Activated naive CD4-positive, alpha-beta T cell treated with anti-CD3 and anti-CD28 coated beads for 36 hours (primary cell): ENCODE measurements at regions of chr1 and their contacts with region 1.

Region 1: GRCh38 chr1:150486964-150487762 is at the start of gene TARS2:
- DNase-seq: peak; percentile 99
- H3K4me3 Mint-ChIP-seq: peak within 1 kb of the TSS; percentile 98
- H3K27ac Mint-ChIP-seq: peak within 1 kb of the TSS; percentile 96
- H3K4me1 Mint-ChIP-seq: peaks cover 10% of the 10 kb centered on the region
- H3K27me3 Mint-ChIP-seq: no peaks in the 10 kb centered on the region
- total RNA-seq, gene TARS2: 43.7 to 46.0 TPM

Region 2: DNA sequence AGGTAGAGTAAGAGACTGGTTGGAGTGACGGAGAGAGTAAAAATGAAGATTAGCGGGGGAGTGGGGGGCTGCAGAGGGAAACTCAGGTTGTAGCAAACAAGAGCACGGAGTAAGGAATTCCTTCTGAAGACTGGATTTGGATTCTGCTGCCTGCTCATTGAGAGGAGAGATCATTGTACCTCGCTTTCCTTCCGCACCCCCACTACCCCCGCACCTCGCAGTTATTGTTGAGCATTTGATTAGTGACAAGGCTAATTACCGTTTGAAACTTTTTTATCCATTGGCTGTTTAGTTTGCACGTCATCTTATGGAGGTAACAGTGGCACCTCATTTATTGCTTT is 165.4 kb before region 1 on chr1:
- CTCF ChIA-PET with region 1: no interaction called
- intact Hi-C with region 1: loop called (anchors 1 kb)
- DNase-seq: no peak
- H3K4me3 Mint-ChIP-seq: peak overlapping the region; percentile 99
- H3K27ac Mint-ChIP-seq: peak overlapping the region; percentile 99
- H3K4me1 Mint-ChIP-seq: peaks cover 36% of the 10 kb centered on the region
- H3K27me3 Mint-ChIP-seq: no peaks in the 10 kb centered on the region

Region 3: DNA sequence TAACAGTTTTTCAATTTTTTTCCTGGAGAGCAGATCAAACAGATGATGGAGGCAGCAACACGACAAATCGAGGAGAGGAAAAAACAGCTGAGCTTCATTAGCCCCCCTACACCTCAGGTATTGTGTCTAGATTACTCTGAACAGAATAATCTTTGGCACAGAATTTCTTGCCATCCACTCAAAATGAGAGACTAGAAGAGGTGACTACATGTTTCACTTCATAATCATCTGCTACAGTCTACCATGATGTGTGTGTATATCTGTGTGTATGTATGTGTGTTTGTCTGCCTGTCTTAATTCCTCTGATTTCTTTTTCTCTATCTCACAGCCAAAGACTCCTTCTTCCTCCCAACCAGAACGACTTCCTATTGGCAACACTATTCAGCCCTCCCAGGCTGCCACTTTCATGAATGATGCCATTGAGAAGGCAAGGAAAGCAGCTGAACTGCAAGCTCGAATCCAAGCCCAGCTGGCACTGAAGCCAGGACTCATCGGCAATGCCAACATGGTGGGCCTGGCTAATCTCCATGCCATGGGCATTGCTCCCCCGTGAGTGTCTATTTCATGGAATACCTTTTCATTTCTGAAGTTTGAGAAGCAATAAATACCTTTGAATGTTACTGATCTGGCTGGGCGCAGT is 154.4 kb before region 1 on chr1:
- CTCF ChIA-PET with region 1: no interaction called
- intact Hi-C with region 1: no loop called
- DNase-seq: no peak
- H3K4me3 Mint-ChIP-seq: no peak overlapping the region
- H3K27ac Mint-ChIP-seq: no peak overlapping the region
- H3K4me1 Mint-ChIP-seq: peaks cover 5% of the 10 kb centered on the region
- H3K27me3 Mint-ChIP-seq: no peaks in the 10 kb centered on the region

Region 4: DNA sequence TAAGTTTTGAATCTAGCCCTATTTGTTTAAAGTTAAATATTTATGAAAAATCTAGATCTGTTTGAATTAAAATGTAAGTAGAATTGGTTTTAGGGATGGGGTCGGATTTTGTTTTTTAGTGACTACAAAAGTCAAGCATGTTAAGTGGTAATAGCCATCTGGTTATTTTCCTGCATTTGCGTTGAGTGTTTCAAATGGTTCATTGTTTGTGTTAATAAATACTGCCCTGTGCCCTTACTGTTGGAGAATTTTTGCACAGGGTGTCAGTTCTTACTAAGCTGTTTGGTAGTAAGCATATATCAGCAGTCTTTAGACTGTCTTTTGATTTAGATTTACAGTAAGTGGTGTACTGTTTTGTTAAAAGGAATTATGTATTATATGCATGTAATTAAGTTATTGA is 46.0 kb before region 1 on chr1:
- CTCF ChIA-PET with region 1: no interaction called
- intact Hi-C with region 1: no loop called
- DNase-seq: no peak
- H3K4me3 Mint-ChIP-seq: no peak overlapping the region
- H3K27ac Mint-ChIP-seq: no peak overlapping the region
- H3K4me1 Mint-ChIP-seq: peaks cover 13% of the 10 kb centered on the region
- H3K27me3 Mint-ChIP-seq: no peaks in the 10 kb centered on the region

Region 5: DNA sequence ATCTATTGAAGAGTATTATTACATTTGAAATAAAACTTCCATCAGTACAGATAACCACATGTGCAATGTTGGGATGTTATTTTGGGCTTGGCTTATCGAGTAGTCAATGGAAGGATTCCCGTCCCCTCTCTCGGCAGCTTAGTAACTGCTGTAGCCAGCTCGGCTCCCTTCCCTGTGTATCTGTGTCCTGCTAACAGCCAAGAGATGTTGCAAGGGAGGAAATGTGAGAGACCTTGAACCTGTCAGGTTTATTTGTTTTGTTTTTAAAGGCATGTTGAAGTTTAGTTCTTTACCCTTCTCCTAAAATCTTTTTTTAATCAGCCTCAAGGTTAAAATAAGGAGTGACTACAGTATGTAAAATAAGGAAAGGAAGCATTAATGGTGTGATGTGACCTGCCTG is 13.5 kb before region 1 on chr1:
- CTCF ChIA-PET with region 1: no interaction called
- intact Hi-C with region 1: no loop called
- DNase-seq: no peak
- H3K4me3 Mint-ChIP-seq: no peak overlapping the region
- H3K27ac Mint-ChIP-seq: no peak overlapping the region
- H3K4me1 Mint-ChIP-seq: peaks cover 7% of the 10 kb centered on the region
- H3K27me3 Mint-ChIP-seq: no peaks in the 10 kb centered on the region

Region 6: DNA sequence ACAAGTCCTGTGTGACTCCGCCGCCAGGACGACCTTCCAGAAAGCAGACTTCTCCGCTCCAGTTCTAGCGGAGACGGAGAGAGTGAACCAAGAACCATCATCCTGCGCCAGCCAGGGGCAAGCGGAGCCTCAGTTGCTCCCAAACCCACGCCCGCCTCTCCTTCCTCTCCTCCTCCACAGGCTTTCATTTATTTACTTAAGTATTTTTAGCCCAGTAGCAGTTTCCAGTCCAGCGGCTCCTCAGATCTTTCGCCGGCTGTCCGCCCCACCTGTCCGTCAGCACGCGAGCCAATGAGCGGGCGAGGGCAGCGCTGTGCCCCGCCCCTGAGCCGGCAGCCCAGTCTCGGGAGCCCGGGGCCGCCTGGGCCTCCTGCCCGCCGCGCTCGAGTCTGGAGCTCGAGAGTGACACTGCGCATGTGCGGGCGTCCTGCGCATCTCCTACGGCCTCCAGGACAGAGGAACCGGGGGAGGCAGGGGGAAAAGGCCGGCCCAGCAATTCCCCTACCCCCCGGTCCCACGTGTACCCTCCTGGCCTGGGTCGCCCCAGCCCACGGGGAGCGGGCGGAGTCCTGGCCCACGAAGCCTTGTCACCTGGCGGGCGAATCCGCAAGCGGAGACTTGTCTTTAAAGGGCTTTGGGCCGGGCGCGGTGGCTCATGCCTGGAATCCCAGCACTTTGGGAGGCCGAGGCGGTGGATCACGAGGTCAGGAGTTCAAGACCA is 28.3 kb after region 1 on chr1 and contains the start of gene FALEC:
- CTCF ChIA-PET with region 1: interaction called, 3 read pairs
- intact Hi-C with region 1: loop called (anchors 1 kb)
- DNase-seq: peak; percentile 91
- H3K4me3 Mint-ChIP-seq: peak within 1 kb of the TSS; percentile 90
- H3K27ac Mint-ChIP-seq: peak within 1 kb of the TSS; percentile 20
- H3K4me1 Mint-ChIP-seq: peaks cover 9% of the 10 kb centered on the region
- H3K27me3 Mint-ChIP-seq: no peaks in the 10 kb centered on the region
- total RNA-seq, gene FALEC: not detected